Psoas muscle (tissue), 8 donors: ENCODE measurements at regions of chr1 and their contacts with region 1.

Region 1: GRCh38 chr1:207404849-207405525 is 49.1 kb upstream of the CR2 start:
- DNase-seq: no peak
- ATAC-seq: peak; percentile 64 to 91 (median 76)
- H3K4me3 ChIP-seq: no peak overlapping the region
- H3K27ac ChIP-seq: no peak overlapping the region
- H3K4me1 ChIP-seq: no peaks in the 10 kb centered on the region
- H3K27me3 ChIP-seq: no peaks in the 10 kb centered on the region
- CTCF ChIP-seq: peak; percentile 80

Region 2: GRCh38 chr1:207084701-207085180 is 320.2 kb before region 1 on chr1:
- intact Hi-C with region 1: loop called (anchors 2 kb)
- DNase-seq: no peak
- ATAC-seq: peak; percentile 57 to 84 (median 67)
- H3K4me3 ChIP-seq: no peak overlapping the region
- H3K27ac ChIP-seq: no peak overlapping the region
- H3K4me1 ChIP-seq: no peaks in the 10 kb centered on the region
- H3K27me3 ChIP-seq: no peaks in the 10 kb centered on the region
- CTCF ChIP-seq: peak; percentile 64

Region 3: GRCh38 chr1:207145401-207146058 is 259.5 kb before region 1 on chr1:
- intact Hi-C with region 1: no loop called
- DNase-seq: no peak
- ATAC-seq: no peak
- H3K4me3 ChIP-seq: no peak overlapping the region
- H3K27ac ChIP-seq: no peak overlapping the region
- H3K4me1 ChIP-seq: no peaks in the 10 kb centered on the region
- H3K27me3 ChIP-seq: no peaks in the 10 kb centered on the region
- CTCF ChIP-seq: no peak

Region 4: DNA sequence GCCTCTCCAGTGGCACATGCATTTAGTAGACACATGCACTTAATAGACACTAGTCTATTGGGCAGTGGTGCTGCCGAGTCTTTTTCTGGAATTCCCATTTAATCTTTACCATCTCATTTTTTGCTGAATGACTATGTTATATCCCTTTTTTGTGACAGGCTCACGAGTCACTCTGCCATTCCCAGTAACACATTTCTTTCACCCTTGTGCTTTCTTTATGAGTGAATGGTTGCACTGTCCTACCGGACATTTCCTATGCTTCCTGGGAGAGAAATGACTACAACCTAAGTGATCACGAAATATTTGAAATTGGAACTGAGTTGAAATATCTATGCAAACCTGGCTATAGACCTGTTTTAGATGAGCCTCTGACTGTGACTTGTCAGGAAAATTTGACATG is 230.1 kb before region 1 on chr1:
- intact Hi-C with region 1: loop called in 1 of 2 experiments (anchors 5 kb)
- DNase-seq: no peak
- ATAC-seq: no peak
- H3K4me3 ChIP-seq: no peak overlapping the region
- H3K27ac ChIP-seq: no peak overlapping the region
- H3K4me1 ChIP-seq: no peaks in the 10 kb centered on the region
- H3K27me3 ChIP-seq: no peaks in the 10 kb centered on the region
- CTCF ChIP-seq: no peak

Region 5: GRCh38 chr1:207181838-207182237 is 223.1 kb before region 1 on chr1:
- intact Hi-C with region 1: loop called (anchors 2 to 5 kb)
- DNase-seq: no peak
- ATAC-seq: peak in 1 of 4 donors; percentile 68
- H3K4me3 ChIP-seq: no peak overlapping the region
- H3K27ac ChIP-seq: no peak overlapping the region
- H3K4me1 ChIP-seq: no peaks in the 10 kb centered on the region
- H3K27me3 ChIP-seq: no peaks in the 10 kb centered on the region
- CTCF ChIP-seq: peak; percentile 35

Region 6: GRCh38 chr1:207261971-207262370 is 143.0 kb before region 1 on chr1:
- intact Hi-C with region 1: loop called in 1 of 2 experiments (anchors 10 kb)
- DNase-seq: no peak
- ATAC-seq: no peak
- H3K4me3 ChIP-seq: no peak overlapping the region
- H3K27ac ChIP-seq: no peak overlapping the region
- H3K4me1 ChIP-seq: no peaks in the 10 kb centered on the region
- H3K27me3 ChIP-seq: no peaks in the 10 kb centered on the region
- CTCF ChIP-seq: no peak

Region 7: DNA sequence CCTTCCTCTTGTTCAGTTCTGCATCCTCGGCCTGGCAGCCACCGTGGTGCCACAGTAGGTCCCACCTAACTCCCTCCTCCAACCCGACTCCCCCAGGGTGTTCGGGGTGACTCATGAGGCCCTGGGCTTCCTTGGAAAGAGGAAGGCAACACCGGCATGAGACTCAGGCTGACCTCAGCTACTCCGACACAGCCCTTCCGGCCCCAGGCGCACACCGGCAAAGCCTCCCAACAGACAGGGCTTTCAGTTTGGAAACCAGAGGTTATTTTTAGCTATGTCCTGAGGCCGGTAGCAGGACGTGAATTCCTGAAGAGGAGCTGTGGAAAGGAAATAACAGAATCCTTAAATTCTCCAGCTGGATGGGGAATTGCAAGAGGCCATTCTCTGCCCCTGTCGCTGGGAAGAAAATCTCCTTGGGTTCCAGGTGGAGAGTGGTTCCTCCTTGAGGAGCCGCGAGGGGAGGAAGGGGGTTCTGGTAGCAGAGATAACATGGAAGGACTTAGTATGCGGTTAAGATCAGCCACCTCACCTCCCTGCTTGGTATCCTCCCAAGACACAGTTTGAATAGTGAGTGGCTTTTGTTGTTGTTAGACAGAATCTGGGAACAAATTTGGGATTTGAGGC is 814.8 kb after region 1 on chr1:
- intact Hi-C with region 1: no loop called
- DNase-seq: peak; percentile 79 to 87
- ATAC-seq: peak; percentile 77 to 94 (median 88)
- H3K4me3 ChIP-seq: peak overlapping the region; percentile 39
- H3K27ac ChIP-seq: peak overlapping the region; percentile 79
- H3K4me1 ChIP-seq: peaks cover 61% of the 10 kb centered on the region
- H3K27me3 ChIP-seq: no peaks in the 10 kb centered on the region
- CTCF ChIP-seq: no peak